Left colon (tissue), 2 donors: ENCODE measurements at regions of chr2 and their contacts with region 1.

Region 1: DNA sequence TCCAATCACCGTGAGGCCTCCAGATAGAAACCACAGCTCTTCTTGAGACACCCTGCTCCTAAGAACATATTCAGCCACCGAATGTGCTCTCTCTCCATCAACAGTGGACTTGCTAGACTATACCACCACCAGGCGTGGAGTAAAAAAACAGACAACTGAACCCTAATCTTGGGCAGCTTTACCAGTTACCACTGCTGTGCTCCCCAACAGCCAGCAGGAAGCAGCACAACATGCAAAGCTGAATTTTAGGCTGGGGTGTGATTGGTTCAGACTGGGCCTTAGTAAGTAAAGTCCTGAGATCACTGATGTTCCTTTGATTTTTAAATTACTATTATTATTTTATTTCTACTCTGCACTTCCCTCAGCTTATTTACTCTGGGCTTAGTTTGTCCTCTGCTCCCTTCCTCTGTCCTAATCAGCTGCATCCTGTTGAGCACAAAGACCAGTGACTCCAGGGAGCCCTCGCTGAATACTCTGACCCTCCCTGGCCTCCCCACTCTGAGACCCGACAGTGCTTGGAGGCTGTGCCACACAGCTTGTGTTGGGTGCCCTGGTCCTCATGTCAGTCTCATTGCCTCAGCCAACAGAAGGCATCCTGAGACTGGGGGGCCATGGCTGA is 21.9 kb downstream of the MRPL35 start:
- DNase-seq: peak in 1 of 2 donors; percentile 54
- ATAC-seq: peak; percentile 63

Region 2: GRCh38 chr2:86368161-86368824 is 147.1 kb after region 1 on chr2:
- intact Hi-C with region 1: loop called in 1 of 2 experiments (anchors 5 kb)
- DNase-seq: peak in 1 of 2 donors; percentile 62
- ATAC-seq: peak; percentile 51